Right ventricle myocardium superior (tissue), 1 donor: ENCODE measurements at regions of chr14 and their contacts with region 1.

Region 1: DNA sequence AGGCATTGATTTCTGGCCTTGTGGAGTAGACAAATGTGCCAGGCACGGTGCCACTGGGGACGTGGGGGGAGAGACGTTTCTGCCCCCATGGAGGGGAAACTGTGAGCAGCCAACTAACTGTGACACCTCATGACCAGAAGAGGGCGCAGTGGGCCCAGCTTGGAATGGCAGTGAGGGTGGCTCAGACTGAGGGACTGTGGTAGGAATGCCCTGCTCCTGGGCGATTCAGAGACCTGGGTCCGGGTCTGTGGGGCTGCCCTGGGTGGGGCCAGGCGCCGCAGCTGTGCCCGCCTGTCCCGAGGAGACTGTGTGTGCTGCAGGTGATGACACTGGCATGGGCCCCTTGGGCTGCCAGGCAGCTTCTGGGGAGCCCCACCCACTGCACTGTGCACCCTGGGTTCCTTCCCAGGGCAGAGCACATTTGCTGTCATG is 60.6 kb downstream of the SLC25A47 start:
- DNase-seq: peak; percentile 67
- ATAC-seq: peak; percentile 75

Region 2: GRCh38 chr14:100533656-100534485 is 150.1 kb after region 1 on chr14:
- intact Hi-C with region 1: no loop called
- DNase-seq: peak; percentile 45
- ATAC-seq: peak; percentile 50

Region 3: GRCh38 chr14:100645192-100645990 is 261.6 kb after region 1 on chr14:
- intact Hi-C with region 1: loop called (anchors 10 kb)
- DNase-seq: peak; percentile 86
- ATAC-seq: peak; percentile 93